ENCODE measurements at regions of chr6 and their contacts with region 1.

Region 1: GRCh38 chr6:31795616-31796298 is at the start of gene VARS1:
- DNase-seq: peak; percentile 98
- total RNA-seq, gene VARS1: 49.0 to 60.8 TPM

Region 2: DNA sequence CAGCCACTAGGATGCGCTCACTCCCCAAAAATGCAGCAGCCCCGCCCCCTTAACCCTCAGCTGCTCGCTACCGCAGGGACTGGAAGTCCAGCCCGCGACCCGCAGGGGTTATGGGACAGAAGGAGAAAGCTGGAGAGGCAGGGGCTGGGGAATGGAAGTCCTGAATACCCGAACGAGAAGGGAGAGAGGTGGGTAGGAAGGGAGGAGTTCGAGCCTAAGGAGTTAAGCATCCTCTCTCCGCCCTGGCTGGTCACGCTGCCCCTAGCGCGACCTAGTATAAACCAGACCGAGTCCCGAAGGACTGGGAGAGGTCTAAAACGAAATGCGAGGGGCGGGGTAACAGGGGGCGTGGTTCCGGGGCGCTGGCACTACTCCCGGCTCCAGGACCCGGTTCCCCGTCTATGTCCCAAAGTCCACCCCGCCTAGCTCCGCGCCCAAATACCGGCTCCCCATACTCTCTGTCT is 66.2 kb before region 1 on chr6:
- intact Hi-C with region 1: loop called (anchors 10 kb)
- DNase-seq: peak; percentile 98

Region 3: GRCh38 chr6:31739639-31740396 is 55.9 kb before region 1 on chr6 and contains the start of gene MSH5:
- intact Hi-C with region 1: loop called in 1 of 2 experiments (anchors 10 kb)
- DNase-seq: peak; percentile 99
- total RNA-seq, gene MSH5: 7.7 to 9.8 TPM

Region 4: DNA sequence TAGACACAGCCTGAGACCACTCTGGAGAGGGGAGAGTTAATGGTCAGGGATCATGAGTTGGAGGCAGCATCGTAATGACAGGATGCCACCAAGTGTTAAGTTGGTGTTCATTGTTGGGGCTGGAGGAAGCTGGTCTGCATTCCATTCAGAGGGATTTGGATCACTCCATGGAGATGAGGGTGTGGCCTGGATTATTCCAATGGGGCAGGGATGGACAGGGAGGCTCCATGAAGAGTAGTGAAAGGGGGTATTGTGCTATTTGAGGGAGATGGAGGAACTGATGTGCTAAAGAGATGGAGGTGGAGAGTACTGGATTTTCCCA is 32.2 kb before region 1 on chr6:
- intact Hi-C with region 1: no loop called
- DNase-seq: no peak

Region 5: GRCh38 chr6:31870385-31870921 is 74.7 kb after region 1 on chr6:
- intact Hi-C with region 1: loop called in 1 of 2 experiments (anchors 1 kb)
- DNase-seq: no peak

Measured in posterior vena cava (tissue), 2 donors.